Heart left ventricle (tissue), 16 donors: ENCODE measurements at regions of chr7 and their contacts with region 1.

Region 1: GRCh38 chr7:101278461-101279292 is 33.8 kb upstream of the FIS1 start:
- DNase-seq: no peak
- ATAC-seq: no peak
- H3K4me3 ChIP-seq: no peak overlapping the region
- H3K27ac ChIP-seq: no peak overlapping the region
- H3K4me1 ChIP-seq: peaks cover 0 to 6% (median 0%) of the 10 kb centered on the region in 12 donors
- H3K27me3 ChIP-seq: peaks cover 0 to 33% (median 0%) of the 10 kb centered on the region in 9 donors
- CTCF ChIP-seq: no peak
- POLR2A ChIP-seq: no peak

Region 2: DNA sequence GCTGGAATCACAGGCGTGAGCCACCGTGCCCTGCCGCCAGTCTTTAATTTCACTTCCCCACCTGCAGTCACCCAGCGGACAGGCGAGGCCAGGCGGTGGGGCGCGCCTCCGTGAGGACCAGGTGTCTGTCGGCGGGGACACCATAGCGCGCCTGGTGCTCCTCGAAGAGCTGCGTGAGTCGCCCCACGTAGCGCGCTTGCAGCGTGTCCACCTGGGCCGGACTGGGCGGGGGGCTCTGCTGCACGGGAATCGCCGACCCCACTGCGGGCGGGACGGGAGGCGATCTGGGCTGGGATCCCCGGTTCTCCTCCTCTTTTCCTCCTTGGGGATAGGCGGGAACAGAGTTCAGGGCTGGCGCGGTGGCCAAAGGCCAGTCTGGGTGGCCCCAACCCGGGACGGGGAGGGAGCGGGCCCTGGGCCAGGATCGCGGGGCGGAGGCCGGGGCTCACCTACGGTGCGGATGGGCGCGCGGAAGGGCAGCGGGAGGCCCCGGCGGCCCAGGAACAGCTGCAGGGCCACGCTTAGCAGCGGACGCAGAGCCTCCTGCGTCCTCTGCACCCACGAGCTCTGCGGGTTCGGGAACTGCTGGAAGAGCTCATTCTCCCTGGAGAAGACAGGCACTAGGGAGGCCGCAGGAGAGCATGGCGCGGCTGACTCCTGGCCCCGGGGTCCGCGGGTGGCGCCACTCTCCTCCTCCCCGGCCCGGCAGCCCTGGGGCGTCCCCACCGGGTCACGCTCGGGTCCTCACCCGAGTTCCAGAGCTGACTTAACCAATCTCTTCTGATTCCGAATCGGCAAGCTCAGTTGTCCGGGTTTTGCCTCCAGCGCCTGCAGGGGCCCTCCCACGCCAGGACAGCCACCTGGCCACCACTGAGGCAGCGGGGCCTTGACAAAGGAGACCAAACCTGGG is 76.7 kb before region 1 on chr7:
- intact Hi-C with region 1: loop called in 1 of 10 experiments (anchors 5 kb)
- DNase-seq: no peak
- ATAC-seq: peak in 1 of 4 donors; percentile 40
- H3K4me3 ChIP-seq: peak overlapping the region in 7 of 12 donors; percentile 7 to 28 (median 16)
- H3K27ac ChIP-seq: no peak overlapping the region
- H3K4me1 ChIP-seq: peaks cover 0 to 13% (median 8%) of the 10 kb centered on the region in 12 donors
- H3K27me3 ChIP-seq: peaks cover 16 to 65% (median 34%) of the 10 kb centered on the region in 9 donors
- CTCF ChIP-seq: no peak
- POLR2A ChIP-seq: no peak

Region 3: DNA sequence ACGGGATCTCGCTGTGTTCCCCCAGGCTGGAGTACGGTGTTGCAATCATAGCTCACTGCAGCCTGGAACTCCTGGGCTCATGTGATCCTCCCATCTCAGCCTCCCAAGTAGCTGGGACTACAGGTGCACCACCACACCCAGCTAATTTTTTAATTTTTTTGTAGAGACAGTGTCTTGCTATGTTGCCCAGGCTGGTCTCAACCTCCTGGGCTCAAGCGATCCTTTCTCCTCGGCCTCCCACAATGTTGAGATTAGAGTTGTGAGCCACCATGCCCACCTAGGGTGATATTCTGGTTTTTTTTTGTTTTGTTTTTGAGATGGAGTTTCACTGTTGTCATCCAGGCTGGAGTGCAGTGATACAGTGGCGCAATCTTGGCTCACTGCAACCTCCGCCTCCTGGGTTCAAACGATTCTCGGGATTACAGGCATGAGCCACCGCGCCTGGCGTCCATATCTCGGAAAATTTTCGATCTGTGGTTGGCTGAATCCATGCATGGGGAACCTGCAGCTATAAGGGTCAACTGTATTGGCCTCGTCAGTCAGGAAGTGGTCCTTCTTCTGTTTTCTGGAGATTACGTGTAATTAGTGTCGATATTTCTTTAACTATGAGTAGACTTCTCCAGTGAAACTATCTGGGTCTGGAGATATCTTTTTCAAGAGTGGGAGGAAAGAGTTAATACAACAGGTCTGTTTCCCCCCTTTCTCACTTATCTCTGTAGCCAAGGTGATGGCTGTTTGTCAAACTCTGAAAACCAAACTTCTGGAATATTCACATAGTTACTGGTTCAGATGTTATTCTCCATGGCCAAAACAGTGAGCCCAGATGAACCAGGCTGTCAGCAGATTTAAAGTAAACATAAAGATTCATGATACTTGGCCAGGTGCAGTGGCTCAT is 12.8 kb before region 1 on chr7:
- intact Hi-C with region 1: loop called in 1 of 10 experiments (anchors 2 kb)
- DNase-seq: no peak
- ATAC-seq: no peak
- H3K4me3 ChIP-seq: no peak overlapping the region
- H3K27ac ChIP-seq: no peak overlapping the region
- H3K4me1 ChIP-seq: peaks cover 0 to 5% (median 0%) of the 10 kb centered on the region in 12 donors
- H3K27me3 ChIP-seq: peaks cover 0 to 5% (median 0%) of the 10 kb centered on the region in 9 donors
- CTCF ChIP-seq: no peak
- POLR2A ChIP-seq: no peak